Left ventricle myocardium superior (tissue), 1 donor: ENCODE measurements at regions of chr18 and their contacts with region 1.

Region 1: DNA sequence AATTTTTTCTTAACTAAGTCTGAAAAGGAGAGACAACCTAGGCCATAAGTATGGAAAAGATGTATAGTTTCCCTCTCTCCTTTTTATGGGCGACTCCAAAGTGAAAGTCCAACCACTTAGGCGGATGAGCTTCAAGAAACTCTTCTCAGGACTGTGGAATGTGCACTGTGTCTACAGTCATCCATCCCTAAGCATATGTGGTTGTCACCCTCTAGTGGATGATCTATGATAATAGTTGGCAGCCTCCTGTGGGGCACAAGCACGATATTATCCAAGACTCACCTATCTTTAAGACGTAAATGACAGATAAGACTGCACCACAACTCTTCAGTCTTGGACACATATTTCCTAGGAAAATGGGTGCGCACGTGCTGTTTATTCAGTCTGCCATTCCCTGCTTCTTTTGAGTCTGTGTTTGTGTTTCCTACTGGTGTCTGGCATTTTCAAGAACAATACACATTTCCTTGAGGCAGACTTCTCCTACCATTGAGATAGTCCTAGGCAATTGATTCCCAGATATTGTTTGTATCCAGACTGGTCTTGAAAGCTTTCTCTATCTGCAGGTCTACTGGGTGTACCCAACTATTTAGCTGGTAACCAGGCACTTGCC is 145.5 kb upstream of the CTAGE1 start:
- DNase-seq: no peak
- ATAC-seq: peak; percentile 62

Region 2: GRCh38 chr18:21914739-21915319 is 648.4 kb before region 1 on chr18:
- intact Hi-C with region 1: loop called (anchors 10 kb)
- DNase-seq: no peak
- ATAC-seq: peak; percentile 80

Region 3: GRCh38 chr18:21997207-21998143 is 565.7 kb before region 1 on chr18:
- intact Hi-C with region 1: loop called (anchors 5 kb)
- DNase-seq: no peak
- ATAC-seq: peak; percentile 77

Region 4: DNA sequence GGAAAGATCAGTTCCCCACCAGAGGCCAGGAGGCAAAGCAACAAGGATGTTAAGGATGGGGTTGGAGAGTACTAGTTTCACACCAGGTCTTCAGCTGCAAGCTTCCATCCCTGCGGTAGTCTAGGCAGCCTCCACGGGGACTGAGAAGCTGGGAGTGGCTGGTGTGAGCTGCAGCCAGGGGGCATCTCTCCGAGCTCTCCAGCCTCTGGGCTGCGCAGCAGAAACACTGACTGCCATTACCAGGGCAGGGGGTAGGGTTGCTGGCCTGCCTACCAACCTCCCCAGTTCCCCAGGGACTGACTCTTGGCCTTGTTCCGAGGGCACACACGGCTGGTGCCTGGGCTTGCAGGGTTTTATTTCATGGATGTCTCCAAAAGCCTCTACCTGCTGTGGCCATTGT is 377.9 kb before region 1 on chr18:
- intact Hi-C with region 1: loop called (anchors 10 kb)
- DNase-seq: peak; percentile 69
- ATAC-seq: peak; percentile 63

Region 5: DNA sequence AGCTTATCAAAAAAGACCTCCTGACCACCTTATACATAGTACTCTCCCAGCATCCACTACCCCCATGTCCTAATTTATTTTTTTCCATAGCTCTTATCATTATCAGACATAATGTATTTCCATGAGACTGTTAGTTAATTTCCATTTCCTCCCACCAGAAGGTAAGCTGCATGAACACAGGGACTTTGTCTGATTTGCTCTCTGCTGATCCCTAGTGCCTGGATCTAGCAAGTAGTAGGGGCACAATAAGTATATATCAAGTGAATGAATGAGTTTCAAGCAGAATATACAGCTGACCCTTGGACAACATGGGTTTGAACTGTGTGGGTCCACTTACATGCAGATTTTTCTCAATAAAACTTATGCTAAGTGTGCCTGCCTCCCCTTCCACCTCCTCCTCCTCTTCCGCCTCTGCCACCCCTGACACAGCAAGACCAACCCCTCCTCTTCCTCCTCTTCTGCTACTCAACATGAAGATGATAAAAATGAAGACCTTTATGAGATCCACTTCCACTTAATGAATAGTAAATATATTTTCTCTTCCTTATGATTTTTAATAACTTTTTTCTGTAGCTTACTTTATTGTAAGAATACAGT is 199.2 kb before region 1 on chr18:
- intact Hi-C with region 1: loop called (anchors 10 kb)
- DNase-seq: no peak
- ATAC-seq: peak; percentile 74

Region 6: GRCh38 chr18:22465859-22466457 is 97.2 kb before region 1 on chr18:
- intact Hi-C with region 1: loop called (anchors 5 kb)
- DNase-seq: no peak
- ATAC-seq: peak; percentile 89